ENCODE measurements at regions of chr1 and their contacts with region 1.

Region 1: GRCh38 chr1:117895482-117896114 is 33.8 kb downstream of the GDAP2 start:
- DNase-seq: peak in 3 of 5 donors; percentile 44 to 50 (median 48)
- ATAC-seq: peak in 2 of 4 donors; percentile 34 to 45
- H3K4me3 ChIP-seq: no peak overlapping the region
- H3K27ac ChIP-seq: no peak overlapping the region
- H3K4me1 ChIP-seq: peaks cover 0 to 4% (median 0%) of the 10 kb centered on the region in 12 donors
- H3K27me3 ChIP-seq: no peaks in the 10 kb centered on the region
- CTCF ChIP-seq: peak; percentile 56 to 83 (median 72)
- POLR2A ChIP-seq: no peak

Region 2: DNA sequence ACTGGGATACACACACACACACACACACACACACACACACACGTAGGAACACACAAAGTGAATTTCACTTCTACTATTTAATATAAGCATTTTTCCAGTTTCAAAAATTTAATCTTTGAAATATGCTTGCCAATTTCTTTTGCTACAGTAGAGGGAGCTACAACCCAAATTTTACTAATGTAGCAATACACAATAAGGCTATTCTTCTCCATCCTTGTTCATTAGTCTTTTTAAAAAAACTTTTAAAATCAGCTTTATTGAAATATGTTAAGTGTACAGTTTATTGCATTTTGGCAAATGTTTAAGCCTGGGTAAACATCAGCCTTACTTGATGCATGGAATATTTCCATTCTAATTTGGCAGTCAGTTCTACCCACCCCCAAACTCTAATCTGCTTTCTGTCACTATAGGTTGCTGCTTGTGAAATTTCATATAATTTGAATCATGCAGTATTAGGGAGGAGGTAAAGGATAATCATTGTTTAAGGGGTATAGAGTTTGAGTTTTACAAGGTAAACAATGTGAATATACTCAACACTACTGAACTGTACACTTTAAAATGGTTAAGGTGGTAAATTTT is 382.8 kb before region 1 on chr1:
- intact Hi-C with region 1: loop called in 6 of 10 experiments (anchors 2 to 10 kb)
- DNase-seq: no peak
- ATAC-seq: no peak
- H3K4me3 ChIP-seq: no peak overlapping the region
- H3K27ac ChIP-seq: no peak overlapping the region
- H3K4me1 ChIP-seq: no peaks in the 10 kb centered on the region
- H3K27me3 ChIP-seq: no peaks in the 10 kb centered on the region
- CTCF ChIP-seq: peak; percentile 15 to 68 (median 54)
- POLR2A ChIP-seq: no peak

Region 3: GRCh38 chr1:117534995-117535467 is 360.6 kb before region 1 on chr1:
- intact Hi-C with region 1: loop called in 2 of 10 experiments (anchors 5 to 10 kb)
- DNase-seq: peak in 2 of 5 donors; percentile 22 to 33
- ATAC-seq: peak; percentile 70 to 91 (median 88)
- H3K4me3 ChIP-seq: no peak overlapping the region
- H3K27ac ChIP-seq: no peak overlapping the region
- H3K4me1 ChIP-seq: no peaks in the 10 kb centered on the region
- H3K27me3 ChIP-seq: no peaks in the 10 kb centered on the region
- CTCF ChIP-seq: peak; percentile 49 to 74 (median 64)
- POLR2A ChIP-seq: no peak

Region 4: DNA sequence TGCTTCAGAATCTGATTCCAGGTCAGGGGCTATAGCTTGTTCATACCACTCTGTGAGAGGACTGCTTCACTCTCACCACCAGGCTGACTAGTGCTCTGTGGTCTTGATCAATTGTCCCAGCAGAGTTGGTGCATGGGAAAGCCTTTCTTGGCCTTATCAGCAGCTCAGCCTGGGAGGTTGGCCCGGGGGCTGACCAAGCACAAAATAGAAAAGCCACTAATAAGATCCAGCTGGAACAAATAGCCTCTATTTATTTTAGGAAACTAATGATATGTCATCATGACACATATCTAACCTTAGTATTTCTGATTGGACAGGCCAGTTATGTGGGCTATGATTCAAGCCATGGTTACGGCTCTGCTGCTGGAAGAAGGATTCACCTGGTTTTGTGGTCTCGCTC is 100.4 kb before region 1 on chr1:
- intact Hi-C with region 1: loop called in 1 of 10 experiments (anchors 10 kb)
- DNase-seq: peak in 4 of 5 donors; percentile 37 to 66 (median 42)
- ATAC-seq: peak; percentile 58 to 91 (median 78)
- H3K4me3 ChIP-seq: no peak overlapping the region
- H3K27ac ChIP-seq: peak overlapping the region in 3 of 12 donors; percentile 38 to 69 (median 61)
- H3K4me1 ChIP-seq: peaks cover 0 to 28% (median 19%) of the 10 kb centered on the region in 12 donors
- H3K27me3 ChIP-seq: no peaks in the 10 kb centered on the region
- CTCF ChIP-seq: no peak
- POLR2A ChIP-seq: no peak

Region 5: GRCh38 chr1:117871013-117871412 is 24.6 kb before region 1 on chr1:
- intact Hi-C with region 1: no loop called
- DNase-seq: no peak
- ATAC-seq: no peak
- H3K4me3 ChIP-seq: no peak overlapping the region
- H3K27ac ChIP-seq: no peak overlapping the region
- H3K4me1 ChIP-seq: no peaks in the 10 kb centered on the region
- H3K27me3 ChIP-seq: no peaks in the 10 kb centered on the region
- CTCF ChIP-seq: no peak
- POLR2A ChIP-seq: no peak

Measured in heart left ventricle (tissue), 16 donors.